ENCODE measurements at regions of chr4 and their contacts with region 1.

Region 1: GRCh38 chr4:39469429-39470077 is 10.7 kb downstream of the LIAS start:
- DNase-seq: peak; percentile 65 to 71
- H3K4me3 ChIP-seq: no peak overlapping the region
- H3K27ac ChIP-seq: peak overlapping the region in 1 of 2 donors; percentile 18
- H3K4me1 ChIP-seq: no peaks in the 10 kb centered on the region
- H3K27me3 ChIP-seq: no peaks in the 10 kb centered on the region
- CTCF ChIP-seq: peak; percentile 83 to 92

Region 2: DNA sequence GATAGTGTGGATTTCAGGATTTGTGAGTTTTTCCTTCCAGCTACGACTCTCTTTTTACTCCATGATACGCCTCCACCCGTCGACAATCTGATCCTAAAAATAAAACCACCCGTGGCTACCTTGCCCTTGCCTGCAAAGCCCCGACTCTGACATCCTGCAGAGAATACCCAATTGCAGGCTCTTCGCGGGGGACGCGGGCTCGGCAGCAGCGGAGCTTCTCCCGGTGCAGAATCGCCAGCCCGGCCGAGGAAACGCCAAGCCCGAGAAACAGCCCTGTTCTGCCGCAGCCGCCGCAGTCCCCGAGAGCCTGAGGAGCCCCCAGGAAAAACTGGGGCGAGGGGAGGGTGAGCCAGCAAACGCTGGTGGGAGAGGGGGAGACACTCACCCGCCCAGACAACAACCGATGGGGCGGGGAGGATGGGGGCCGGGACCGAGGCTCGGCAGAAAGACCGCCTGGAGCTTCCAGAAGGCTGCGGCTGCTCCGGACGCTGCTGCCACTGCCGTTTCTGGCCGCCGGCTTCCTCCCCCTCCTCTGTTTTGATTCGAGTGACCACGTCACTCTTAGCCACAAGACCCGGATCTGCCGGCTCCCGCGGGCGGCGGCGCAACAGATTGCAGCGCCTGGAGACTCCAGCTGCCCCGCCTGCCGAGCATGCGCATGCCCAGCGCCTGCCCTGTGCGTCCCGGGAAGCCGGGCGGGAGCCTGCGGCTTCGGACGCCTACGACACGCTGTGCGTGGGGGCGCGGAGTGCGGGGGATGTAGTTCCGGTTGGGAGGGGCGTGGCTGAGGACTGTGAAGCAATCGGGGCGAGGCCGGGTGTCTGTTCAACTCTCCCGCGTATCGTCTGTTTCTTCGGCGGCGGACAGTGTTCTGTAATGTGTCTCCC is 169.0 kb after region 1 on chr4 and contains the start of gene SMIM14:
- intact Hi-C with region 1: loop called (anchors 5 kb)
- DNase-seq: peak; percentile 98 to 99
- H3K4me3 ChIP-seq: peak within 1 kb of the TSS; percentile 72 to 96
- H3K27ac ChIP-seq: peak within 1 kb of the TSS; percentile 91 to 99
- H3K4me1 ChIP-seq: peaks cover 0 to 26% (median 15%) of the 10 kb centered on the region in 4 donors
- H3K27me3 ChIP-seq: no peaks in the 10 kb centered on the region
- CTCF ChIP-seq: peak; percentile 27 to 45

Measured in tibial artery (tissue), 4 donors.